CD8-positive, alpha-beta T cell (primary cell): ENCODE measurements at regions of chr10 and their contacts with region 1.

Region 1: DNA sequence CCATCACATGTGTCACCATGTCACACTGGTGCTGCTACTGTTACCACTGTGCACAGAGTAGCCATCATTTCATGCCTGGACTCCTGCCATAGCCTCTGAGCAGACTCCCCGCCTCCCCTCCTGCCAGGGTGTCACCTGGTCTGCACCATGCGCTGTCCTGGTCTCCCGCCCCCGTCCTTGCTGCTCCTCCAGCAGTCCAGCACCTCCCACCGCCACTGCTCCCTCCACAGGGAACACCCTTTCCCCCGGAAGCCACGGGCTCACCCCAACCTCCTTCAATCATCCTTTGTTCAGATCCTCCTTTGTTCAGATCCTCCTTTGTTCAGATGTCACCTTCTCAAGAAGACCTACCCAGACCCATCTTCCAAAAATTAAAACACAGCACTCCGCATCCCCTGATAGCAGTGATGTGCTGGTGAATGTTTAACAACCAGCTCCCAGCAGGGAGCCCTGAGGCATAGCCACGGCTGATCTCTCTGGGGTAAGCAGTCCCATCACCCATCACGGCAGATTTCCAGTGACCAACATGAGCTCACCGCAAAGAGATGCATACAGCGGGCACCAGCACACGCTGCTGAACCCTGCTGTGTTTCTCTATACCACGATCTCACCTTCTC is 237.7 kb downstream of the USP6NL start:
- DNase-seq: no peak
- ATAC-seq: no peak
- H3K4me3 ChIP-seq: no peak overlapping the region
- H3K4me3 Mint-ChIP-seq: no peak overlapping the region
- H3K27ac ChIP-seq: no peak overlapping the region
- H3K27ac Mint-ChIP-seq: no peak overlapping the region
- H3K4me1 ChIP-seq: no peaks in the 10 kb centered on the region
- H3K4me1 Mint-ChIP-seq: peaks cover 12% of the 10 kb centered on the region
- H3K27me3 ChIP-seq: no peaks in the 10 kb centered on the region
- H3K27me3 Mint-ChIP-seq: no peaks in the 10 kb centered on the region
- CTCF ChIP-seq: no peak

Region 2: GRCh38 chr10:11414314-11415038 is 40.7 kb after region 1 on chr10:
- CTCF ChIA-PET with region 1: no interaction called
- POLR2A ChIA-PET with region 1: no interaction called
- intact Hi-C with region 1: loop called in 1 of 2 experiments (anchors 5 kb)
- DNase-seq: no peak
- ATAC-seq: no peak
- H3K4me3 ChIP-seq: no peak overlapping the region
- H3K4me3 Mint-ChIP-seq: no peak overlapping the region
- H3K27ac ChIP-seq: no peak overlapping the region
- H3K27ac Mint-ChIP-seq: no peak overlapping the region
- H3K4me1 ChIP-seq: no peaks in the 10 kb centered on the region
- H3K4me1 Mint-ChIP-seq: peaks cover 11% of the 10 kb centered on the region
- H3K27me3 ChIP-seq: no peaks in the 10 kb centered on the region
- H3K27me3 Mint-ChIP-seq: no peaks in the 10 kb centered on the region
- CTCF ChIP-seq: no peak